Activated CD4-positive, alpha-beta memory T cell treated with anti-CD3 and anti-CD28 coated beads, Interleukin-2, amount 10 ng/mL, durations not matched to agents 7 days and 5 days (primary cell): ENCODE measurements at regions of chr10 and their contacts with region 1.

Region 1: GRCh38 chr10:61896854-61897661 is 4.4 kb upstream of the ARID5B start:
- DNase-seq: peak; percentile 66
- H3K4me3 Mint-ChIP-seq: peak overlapping the region; percentile 68
- H3K27ac Mint-ChIP-seq: peak overlapping the region; percentile 98
- H3K4me1 Mint-ChIP-seq: peaks cover 29% of the 10 kb centered on the region
- H3K27me3 Mint-ChIP-seq: no peaks in the 10 kb centered on the region

Region 2: DNA sequence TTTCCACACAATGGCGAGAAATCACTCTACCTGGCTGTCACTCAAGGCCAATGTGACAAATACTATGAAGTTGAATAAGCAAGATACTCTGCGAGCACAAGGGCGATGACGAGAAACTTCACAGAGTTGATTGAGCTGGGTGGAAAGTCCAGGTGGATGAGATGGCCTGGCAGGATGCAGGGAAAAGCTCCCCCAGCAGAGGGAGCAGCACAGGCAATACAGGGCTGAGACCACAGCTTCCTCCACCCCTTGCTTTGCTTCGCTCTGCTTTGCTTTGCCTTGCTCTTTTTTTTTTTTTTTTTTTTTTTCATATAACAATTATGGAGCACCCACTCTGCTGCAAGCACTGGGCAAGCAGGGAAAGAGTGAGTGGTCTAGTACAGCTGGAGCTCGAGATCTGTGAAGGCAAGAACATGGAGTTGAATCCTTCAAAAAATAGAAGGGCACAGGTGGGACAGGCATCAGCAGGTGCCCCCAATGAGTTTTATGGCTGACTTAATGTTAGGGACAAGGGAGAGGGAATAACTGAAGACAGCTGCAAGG is 146.1 kb before region 1 on chr10:
- CTCF ChIA-PET with region 1: interaction called, 11 read pairs
- POLR2A ChIA-PET with region 1: interaction called, 57 read pairs
- DNase-seq: peak; percentile 76
- H3K4me3 Mint-ChIP-seq: no peak overlapping the region
- H3K27ac Mint-ChIP-seq: peak overlapping the region; percentile 80
- H3K4me1 Mint-ChIP-seq: peaks cover 31% of the 10 kb centered on the region
- H3K27me3 Mint-ChIP-seq: no peaks in the 10 kb centered on the region

Region 3: GRCh38 chr10:61786728-61787127 is 110.3 kb before region 1 on chr10:
- CTCF ChIA-PET with region 1: no interaction called
- POLR2A ChIA-PET with region 1: interaction called, 16 read pairs
- DNase-seq: peak; percentile 31
- H3K4me3 Mint-ChIP-seq: no peak overlapping the region
- H3K27ac Mint-ChIP-seq: peak overlapping the region; percentile 85
- H3K4me1 Mint-ChIP-seq: peaks cover 64% of the 10 kb centered on the region
- H3K27me3 Mint-ChIP-seq: no peaks in the 10 kb centered on the region

Region 4: DNA sequence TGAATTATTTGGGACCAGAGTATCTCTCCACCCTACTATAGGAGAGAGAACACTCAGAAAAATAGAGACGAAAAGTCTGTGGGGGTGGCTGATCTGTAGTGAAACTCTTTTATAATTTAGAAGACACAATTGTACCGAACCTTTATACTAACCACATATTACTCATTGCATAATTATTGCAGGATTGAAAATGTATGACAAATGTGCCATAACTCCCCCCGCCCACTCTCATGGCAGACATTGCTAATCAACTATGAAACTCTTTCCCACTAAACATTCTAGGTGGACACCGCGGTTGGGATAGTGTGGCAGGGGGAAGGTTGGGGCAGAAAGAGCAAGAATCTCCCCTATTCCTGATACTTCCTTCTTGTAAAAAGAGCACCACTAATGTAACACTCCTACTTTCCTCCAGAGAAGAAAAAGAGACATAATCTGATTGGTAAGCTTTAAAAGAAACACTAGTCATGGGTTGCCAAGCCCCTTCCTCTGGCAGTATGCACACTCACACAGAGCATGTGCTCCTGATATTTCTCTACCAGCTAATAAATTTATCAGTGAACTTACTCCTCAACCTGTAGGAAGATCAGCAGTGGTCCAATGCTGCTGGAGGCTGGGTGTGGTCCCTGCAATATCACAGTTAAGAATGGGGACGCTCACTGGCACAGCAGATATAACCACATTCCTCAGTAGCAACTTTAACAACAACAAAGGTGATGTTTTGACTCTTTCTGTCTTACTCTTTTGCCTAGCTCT is 14.3 kb before region 1 on chr10:
- CTCF ChIA-PET with region 1: interaction called, 12 read pairs
- POLR2A ChIA-PET with region 1: interaction called, 4 read pairs
- DNase-seq: no peak
- H3K4me3 Mint-ChIP-seq: no peak overlapping the region
- H3K27ac Mint-ChIP-seq: no peak overlapping the region
- H3K4me1 Mint-ChIP-seq: peaks cover 14% of the 10 kb centered on the region
- H3K27me3 Mint-ChIP-seq: no peaks in the 10 kb centered on the region

Region 5: DNA sequence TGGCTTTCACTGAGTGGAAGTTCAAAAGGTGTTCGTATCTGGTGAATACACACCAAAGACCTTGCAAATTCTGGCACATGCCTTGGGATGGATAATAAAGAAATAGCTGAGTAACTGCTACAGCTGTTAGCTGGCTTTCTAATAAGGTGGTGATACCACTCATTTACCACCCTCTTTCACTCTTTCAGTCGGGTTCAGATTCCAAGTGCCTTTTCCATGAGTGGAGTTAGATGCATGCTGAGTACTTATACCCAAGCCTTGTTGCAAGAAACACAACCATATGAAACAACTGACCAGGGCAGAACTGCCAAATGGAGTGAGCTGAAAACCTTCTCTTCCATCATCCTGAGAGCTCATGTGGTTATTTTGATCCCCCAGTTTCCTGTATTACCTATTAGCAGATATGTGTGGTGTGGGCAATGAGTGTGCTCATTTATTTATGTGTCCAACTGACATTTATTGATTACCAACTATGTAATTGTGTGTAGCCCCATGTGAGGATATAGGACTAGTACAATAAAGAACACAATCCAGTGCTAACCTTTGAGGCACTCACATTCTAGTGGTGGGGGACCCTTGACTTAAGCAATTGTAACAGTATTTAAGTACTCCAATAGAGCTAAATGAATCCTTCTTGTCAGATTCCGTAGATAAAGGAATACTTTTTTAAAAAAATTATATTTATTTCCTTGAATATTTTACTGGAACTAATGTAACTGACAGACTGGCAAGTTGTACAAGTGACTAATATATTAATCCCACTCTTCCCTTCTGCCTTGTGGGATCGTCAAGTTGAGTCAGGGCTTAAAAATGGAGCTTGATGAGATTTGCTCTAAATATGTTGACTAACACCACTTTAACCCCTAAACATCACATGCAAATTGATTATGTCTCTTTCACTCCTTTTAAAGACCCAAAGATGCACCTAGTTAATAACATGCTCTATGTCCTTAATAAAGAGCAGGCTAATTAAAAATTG is 129.1 kb after region 1 on chr10:
- CTCF ChIA-PET with region 1: interaction called, 5 read pairs
- POLR2A ChIA-PET with region 1: interaction called, 20 read pairs
- DNase-seq: no peak
- H3K4me3 Mint-ChIP-seq: no peak overlapping the region
- H3K27ac Mint-ChIP-seq: no peak overlapping the region
- H3K4me1 Mint-ChIP-seq: peaks cover 78% of the 10 kb centered on the region
- H3K27me3 Mint-ChIP-seq: no peaks in the 10 kb centered on the region

Region 6: GRCh38 chr10:62063795-62064472 is 166.9 kb after region 1 on chr10:
- CTCF ChIA-PET with region 1: interaction called, 4 read pairs
- POLR2A ChIA-PET with region 1: interaction called, 785 read pairs
- DNase-seq: no peak
- H3K4me3 Mint-ChIP-seq: peak overlapping the region; percentile 36
- H3K27ac Mint-ChIP-seq: peak overlapping the region; percentile 89
- H3K4me1 Mint-ChIP-seq: peaks cover 88% of the 10 kb centered on the region
- H3K27me3 Mint-ChIP-seq: no peaks in the 10 kb centered on the region

Region 7: DNA sequence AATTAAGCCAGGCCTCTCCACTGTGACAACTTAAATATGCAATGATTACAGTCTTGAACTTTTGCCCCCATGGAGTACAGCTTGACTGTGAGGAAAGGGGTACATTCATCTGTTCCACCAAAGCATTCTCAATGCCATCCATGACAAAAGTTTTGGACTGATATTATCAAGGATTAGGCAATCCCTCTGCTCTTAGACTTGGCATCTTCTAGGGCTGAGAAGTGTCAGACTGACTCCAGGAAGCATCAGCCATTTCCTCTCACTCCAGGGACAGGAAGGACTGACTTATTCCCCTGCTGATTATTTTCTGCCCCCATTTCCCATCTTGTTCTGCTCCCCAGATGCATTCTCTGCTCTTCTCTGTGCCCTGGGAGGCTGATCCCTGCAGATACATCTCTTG is 546.8 kb after region 1 on chr10:
- CTCF ChIA-PET with region 1: no interaction called
- POLR2A ChIA-PET with region 1: no interaction called
- DNase-seq: no peak
- H3K4me3 Mint-ChIP-seq: no peak overlapping the region
- H3K27ac Mint-ChIP-seq: no peak overlapping the region
- H3K4me1 Mint-ChIP-seq: no peaks in the 10 kb centered on the region
- H3K27me3 Mint-ChIP-seq: peaks cover 7% of the 10 kb centered on the region